ENCODE measurements at regions of chr3 and their contacts with region 1.

Region 1: GRCh38 chr3:153634683-153635082 is 472.7 kb downstream of the RAP2B start:
- DNase-seq: no peak
- H3K4me3 ChIP-seq: no peak overlapping the region
- CTCF ChIP-seq: no peak

Region 2: GRCh38 chr3:153704115-153704514 is 69.4 kb after region 1 on chr3:
- in situ Hi-C with region 1: loop called (anchors 5 kb)
- DNase-seq: no peak
- H3K4me3 ChIP-seq: no peak overlapping the region
- CTCF ChIP-seq: no peak